WTC11 (cell line): ENCODE measurements at regions of chr4 and their contacts with region 1.

Region 1: DNA sequence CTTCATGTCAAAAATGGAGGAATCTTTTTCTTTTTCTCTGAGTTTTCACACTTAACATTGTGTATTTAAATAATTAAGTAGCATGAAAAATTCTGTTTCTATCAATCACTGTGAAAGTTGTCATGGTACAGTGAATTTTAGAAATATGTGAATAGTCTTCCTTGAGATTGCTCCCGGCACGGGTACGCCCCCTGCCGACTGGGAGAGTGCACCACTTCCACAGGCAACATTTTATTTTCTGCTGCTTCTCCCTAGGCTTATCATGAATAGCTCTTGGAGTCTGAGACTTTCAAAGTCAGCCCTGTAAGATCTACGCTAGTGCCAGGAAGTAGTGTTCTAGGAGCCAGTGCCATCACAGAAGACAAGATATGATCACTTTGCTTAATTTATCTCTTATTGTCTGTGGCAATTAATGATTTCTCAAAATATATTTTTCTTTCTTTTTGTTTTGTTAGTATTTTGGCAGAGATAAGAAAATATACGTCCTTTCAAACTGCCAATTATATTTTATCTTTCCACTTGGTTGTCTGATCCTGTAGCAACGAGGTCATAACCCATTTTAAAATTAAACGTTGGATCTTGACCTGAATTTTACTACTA is 763.8 kb upstream of the AADAT start:
- DNase-seq: peak; percentile 68
- ATAC-seq: peak; percentile 99
- H3K4me3 Mint-ChIP-seq: no peak overlapping the region
- H3K27ac Mint-ChIP-seq: no peak overlapping the region
- H3K4me1 Mint-ChIP-seq: peaks cover 3% of the 10 kb centered on the region; the same call in 1 of the 2 replicates
- H3K27me3 Mint-ChIP-seq: no peaks in the 10 kb centered on the region
- CTCF ChIP-seq: peak; percentile 74

Region 2: GRCh38 chr4:170758988-170759387 is 94.5 kb before region 1 on chr4:
- CTCF ChIA-PET with region 1: no interaction called
- POLR2A ChIA-PET with region 1: no interaction called
- DNase-seq: no peak
- ATAC-seq: no peak
- H3K4me3 Mint-ChIP-seq: no peak overlapping the region
- H3K27ac Mint-ChIP-seq: no peak overlapping the region
- H3K4me1 Mint-ChIP-seq: no peaks in the 10 kb centered on the region
- H3K27me3 Mint-ChIP-seq: no peaks in the 10 kb centered on the region; the same call in 1 of the 2 replicates
- CTCF ChIP-seq: no peak

Region 3: DNA sequence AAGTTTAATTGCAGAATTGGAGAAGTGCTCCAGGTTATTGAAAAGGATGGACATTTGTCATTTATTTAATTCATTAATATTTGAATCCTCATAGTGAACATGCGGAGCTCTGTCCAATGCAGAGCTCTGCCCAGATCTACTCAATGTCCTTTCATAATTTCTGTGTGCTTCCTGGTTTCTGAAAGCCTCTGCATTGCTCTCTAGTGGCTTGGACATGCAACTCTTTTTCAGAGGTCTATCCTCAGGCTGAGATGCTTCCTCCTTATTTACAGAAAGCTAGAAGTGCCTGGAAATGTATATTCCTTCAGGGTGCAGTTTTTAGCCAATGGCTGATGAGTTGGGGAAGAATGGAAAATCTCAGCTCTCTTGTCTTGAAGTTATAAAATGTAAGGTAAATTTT is 22.3 kb after region 1 on chr4:
- CTCF ChIA-PET with region 1: interaction called, 16 read pairs
- POLR2A ChIA-PET with region 1: no interaction called
- DNase-seq: no peak
- ATAC-seq: peak; percentile 90
- H3K4me3 Mint-ChIP-seq: no peak overlapping the region
- H3K27ac Mint-ChIP-seq: no peak overlapping the region
- H3K4me1 Mint-ChIP-seq: no peaks in the 10 kb centered on the region
- H3K27me3 Mint-ChIP-seq: no peaks in the 10 kb centered on the region
- CTCF ChIP-seq: no peak

Region 4: DNA sequence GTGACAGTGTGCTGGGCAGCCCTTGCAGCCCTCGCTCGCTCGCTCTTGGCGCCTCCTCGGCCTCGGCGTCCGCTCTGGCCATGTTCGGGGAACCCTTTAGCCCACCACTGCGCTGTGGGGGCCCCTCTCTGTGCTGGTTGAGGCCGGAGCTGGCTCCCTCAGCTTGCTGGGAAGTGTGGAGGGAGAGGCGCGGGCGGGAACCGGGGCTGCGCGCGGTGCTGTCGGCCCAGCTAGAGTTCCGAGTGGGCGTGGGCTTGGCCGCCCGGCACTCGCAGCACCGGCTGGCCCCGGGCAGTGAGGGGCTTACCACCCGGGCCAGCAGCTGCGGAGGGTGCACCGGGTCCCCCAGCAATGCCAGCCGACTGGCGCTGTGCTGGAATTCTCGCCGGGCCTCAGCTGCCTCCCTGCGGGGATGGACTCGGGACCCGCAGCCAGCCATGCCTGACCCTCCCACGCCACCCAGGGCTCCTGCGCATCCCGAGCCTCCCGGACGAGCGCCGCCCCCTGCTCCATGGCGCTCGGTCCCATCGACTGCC is 189.5 kb after region 1 on chr4:
- CTCF ChIA-PET with region 1: no interaction called
- POLR2A ChIA-PET with region 1: no interaction called
- DNase-seq: no peak
- ATAC-seq: no peak
- H3K4me3 Mint-ChIP-seq: no peak overlapping the region
- H3K27ac Mint-ChIP-seq: no peak overlapping the region
- H3K4me1 Mint-ChIP-seq: no peaks in the 10 kb centered on the region
- H3K27me3 Mint-ChIP-seq: no peaks in the 10 kb centered on the region
- CTCF ChIP-seq: no peak